MCF 10A (cell line): ENCODE measurements at regions of chr1 and their contacts with region 1.

Region 1: DNA sequence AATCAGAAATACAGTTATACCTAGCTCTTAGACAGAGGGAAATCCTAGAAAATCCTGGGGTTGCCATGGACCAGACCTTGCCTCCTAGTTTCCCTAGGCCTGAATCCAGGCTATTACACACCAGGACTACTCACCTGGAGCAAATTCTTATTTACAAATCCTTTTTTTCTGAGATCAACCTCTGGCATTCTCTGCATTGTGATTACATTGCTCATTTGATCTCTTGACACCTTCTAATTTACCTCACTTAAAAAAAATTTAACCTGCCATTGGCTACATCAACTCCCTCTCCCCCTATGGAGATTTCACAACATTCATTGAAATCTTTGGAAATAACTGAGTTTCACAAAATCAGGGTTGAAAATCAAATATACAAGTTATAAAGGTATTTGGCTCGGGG is 2.9 kb upstream of the C1orf105 start:
- DNase-seq: peak; percentile 30
- H3K4me3 Mint-ChIP-seq: no peak overlapping the region
- H3K27ac Mint-ChIP-seq: no peak overlapping the region
- H3K4me1 Mint-ChIP-seq: peaks cover 7% of the 10 kb centered on the region
- H3K27me3 Mint-ChIP-seq: no peaks in the 10 kb centered on the region
- CTCF ChIP-seq: no peak

Region 2: DNA sequence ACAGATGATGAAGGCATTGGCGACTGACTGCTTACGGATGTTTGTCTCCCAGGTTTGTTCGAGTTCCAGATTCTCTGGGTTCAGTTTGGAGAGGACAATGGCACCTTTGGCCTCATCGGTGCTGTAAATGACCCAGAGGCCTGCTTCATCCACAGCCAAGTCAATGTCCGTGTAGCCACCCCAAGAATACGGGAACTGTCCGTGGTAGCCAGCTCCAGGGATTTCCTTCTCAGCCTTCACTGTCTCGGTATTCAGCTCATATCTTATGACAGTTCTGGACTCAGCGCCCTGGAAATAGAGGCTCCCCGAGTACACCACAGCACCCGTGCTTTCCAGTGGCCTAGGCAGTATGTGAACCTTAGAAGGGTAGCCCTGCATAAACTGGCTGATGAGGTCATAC is 781.4 kb before region 1 on chr1:
- CTCF ChIA-PET with region 1: no interaction called
- POLR2A ChIA-PET with region 1: no interaction called
- intact Hi-C with region 1: loop called (anchors 5 kb)
- DNase-seq: no peak
- H3K4me3 Mint-ChIP-seq: no peak overlapping the region
- H3K27ac Mint-ChIP-seq: no peak overlapping the region
- H3K4me1 Mint-ChIP-seq: no peaks in the 10 kb centered on the region
- H3K27me3 Mint-ChIP-seq: no peaks in the 10 kb centered on the region
- CTCF ChIP-seq: no peak

Region 3: DNA sequence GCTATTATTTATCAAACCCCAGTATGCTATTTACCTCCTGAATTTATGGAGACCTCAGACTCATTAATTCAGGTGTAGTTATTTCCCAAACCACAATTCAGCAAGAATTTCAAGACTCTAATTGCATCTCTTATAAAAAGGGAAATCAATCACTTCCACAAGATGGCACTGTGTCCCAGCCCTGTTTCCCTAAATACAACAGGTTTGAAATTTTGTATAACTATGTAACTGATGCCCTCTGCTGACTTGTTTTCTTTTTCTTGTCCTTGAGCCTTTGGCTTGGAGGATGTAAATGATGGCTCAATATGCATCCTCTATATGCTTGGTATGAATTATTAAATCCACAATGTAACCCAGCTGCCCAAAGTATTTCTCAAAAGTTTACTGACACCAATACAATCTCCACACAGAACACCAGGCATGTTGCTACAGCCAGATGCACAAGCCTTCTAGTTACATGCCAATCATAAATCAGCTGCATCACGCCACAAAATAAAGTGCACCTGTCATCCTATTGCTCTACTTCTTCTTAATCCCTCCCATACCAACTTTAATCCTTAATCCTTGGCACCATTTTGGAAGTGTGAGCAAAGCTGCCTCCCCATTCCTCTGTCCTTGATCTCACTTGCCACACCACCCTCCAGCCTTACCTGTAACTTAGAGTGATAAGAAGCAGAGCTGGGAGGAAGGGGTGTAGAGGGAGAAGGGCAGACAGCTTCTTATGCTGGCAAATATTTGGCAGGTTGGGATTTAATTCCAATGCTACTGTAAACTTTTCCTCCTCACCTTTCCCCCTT is 12.0 kb after region 1 on chr1:
- CTCF ChIA-PET with region 1: interaction called, 13 read pairs
- POLR2A ChIA-PET with region 1: interaction called, 4 read pairs
- intact Hi-C with region 1: no loop called
- DNase-seq: peak; percentile 83
- H3K4me3 Mint-ChIP-seq: no peak overlapping the region
- H3K27ac Mint-ChIP-seq: no peak overlapping the region
- H3K4me1 Mint-ChIP-seq: peaks cover 5% of the 10 kb centered on the region
- H3K27me3 Mint-ChIP-seq: no peaks in the 10 kb centered on the region
- CTCF ChIP-seq: peak; percentile 78

Region 4: GRCh38 chr1:172443626-172444453 is 26.3 kb after region 1 on chr1 and contains the start of gene PIGC:
- CTCF ChIA-PET with region 1: interaction called, 15 read pairs
- POLR2A ChIA-PET with region 1: interaction called, 3 read pairs
- intact Hi-C with region 1: no loop called
- DNase-seq: peak; percentile 93
- H3K4me3 Mint-ChIP-seq: peak within 1 kb of the TSS; percentile 85
- H3K27ac Mint-ChIP-seq: peak within 1 kb of the TSS; percentile 92
- H3K4me1 Mint-ChIP-seq: peaks cover 33% of the 10 kb centered on the region
- H3K27me3 Mint-ChIP-seq: no peaks in the 10 kb centered on the region
- CTCF ChIP-seq: peak; percentile 87
- total RNA-seq, gene PIGC: 20.2 and 23.1 TPM in 2 replicates